ENCODE measurements at regions of chrX and their contacts with region 1.

Region 1: DNA sequence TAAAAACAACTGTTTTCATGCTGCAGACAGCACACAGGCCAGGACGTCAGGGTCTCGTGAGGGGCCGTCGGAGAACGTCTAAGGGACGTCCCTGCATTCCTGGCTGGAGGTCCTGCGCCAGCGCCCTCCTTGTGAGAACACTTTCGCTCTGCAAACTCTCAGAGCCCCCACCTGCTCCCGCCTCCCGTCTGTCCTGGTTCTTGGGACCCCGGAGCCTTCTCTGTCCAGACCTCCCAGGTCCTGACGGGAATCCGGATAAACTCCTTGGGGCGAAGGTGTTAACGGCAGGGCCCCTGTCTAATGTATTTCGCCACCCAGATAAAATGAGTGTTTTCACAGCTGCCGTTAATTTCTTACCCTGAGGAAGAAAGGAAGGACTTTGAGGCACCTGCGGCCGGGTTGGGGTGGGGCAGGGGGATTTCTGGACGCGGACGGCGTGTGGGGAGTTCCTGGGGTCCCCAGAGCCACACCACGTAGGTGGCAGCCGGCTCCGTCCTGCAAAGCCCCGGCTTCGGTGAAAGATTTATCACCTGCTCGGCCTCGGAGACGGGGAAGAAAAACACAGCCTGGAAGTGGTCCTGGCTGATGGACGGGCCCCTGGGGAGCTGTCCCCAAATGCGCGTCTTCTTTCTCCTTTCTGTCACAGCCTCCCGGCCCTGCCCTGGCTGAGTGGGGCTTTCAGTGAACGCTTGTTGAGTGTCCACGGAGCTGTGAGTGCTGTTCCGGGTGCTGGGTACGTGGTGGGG is 35.1 kb upstream of the PPP2R3B start:
- DNase-seq: no peak
- ATAC-seq: no peak

Region 2: GRCh38 chrX:370244-370962 is 51.4 kb before region 1 on chrX:
- intact Hi-C with region 1: loop called (anchors 2 kb)
- DNase-seq: no peak
- ATAC-seq: peak; percentile 10

Measured in sciatic nerve (tissue), 2 donors.